ENCODE measurements at regions of chr16 and their contacts with region 1.

Region 1: GRCh38 chr16:30091474-30092372 is at the start of gene TBX6:
- DNase-seq: peak; percentile 83 to 98
- H3K4me3 ChIP-seq: peak within 1 kb of the TSS; percentile 61
- H3K27ac ChIP-seq: peak within 1 kb of the TSS; percentile 87
- H3K4me1 ChIP-seq: peaks cover 55% of the 10 kb centered on the region
- H3K27me3 ChIP-seq: no peaks in the 10 kb centered on the region
- CTCF ChIP-seq: peak; percentile 72
- total RNA-seq, gene TBX6: 8.3 and 9.6 TPM in 2 replicates

Region 2: GRCh38 chr16:30052671-30053372 is 38.9 kb before region 1 on chr16:
- CTCF ChIA-PET with region 1: no interaction called
- POLR2A ChIA-PET with region 1: interaction called, 32 read pairs
- intact Hi-C with region 1: no loop called
- DNase-seq: peak; percentile 83 to 98
- H3K4me3 ChIP-seq: peak overlapping the region; percentile 66
- H3K27ac ChIP-seq: peak overlapping the region; percentile 28
- H3K4me1 ChIP-seq: peaks cover 20% of the 10 kb centered on the region
- H3K27me3 ChIP-seq: no peaks in the 10 kb centered on the region
- CTCF ChIP-seq: no peak

Region 3: DNA sequence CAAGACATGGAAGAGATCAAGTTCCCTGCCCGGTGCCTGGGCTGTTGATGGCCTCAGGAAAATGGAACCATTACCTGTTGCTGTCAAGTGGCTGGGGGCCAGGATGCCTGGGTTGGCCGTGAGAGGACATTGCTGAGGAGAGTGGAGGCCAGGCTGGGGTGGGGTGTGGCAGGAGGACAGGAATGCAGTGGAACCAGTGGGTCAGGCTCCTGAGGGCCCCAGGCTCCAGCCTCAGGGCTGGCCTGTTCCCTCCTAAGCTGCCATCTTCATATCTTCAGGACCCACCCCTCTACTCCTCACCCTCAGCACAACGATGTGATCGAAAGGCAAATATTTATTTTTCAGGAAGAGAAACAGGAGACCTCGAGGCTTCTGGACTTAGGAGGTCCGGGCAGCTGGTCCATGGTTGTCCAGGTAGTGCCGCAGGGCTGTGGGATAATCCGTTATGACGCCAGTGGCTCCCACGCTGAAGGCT is 12.8 kb after region 1 on chr16:
- CTCF ChIA-PET with region 1: interaction called, 4 read pairs
- POLR2A ChIA-PET with region 1: no interaction called
- intact Hi-C with region 1: loop called (anchors 2 kb)
- DNase-seq: peak; percentile 89 to 97
- H3K4me3 ChIP-seq: 0 out of 2 replicates have a peak overlapping the region, but pooled peaks have one; percentile 3
- H3K27ac ChIP-seq: peak overlapping the region; percentile 73
- H3K4me1 ChIP-seq: peaks cover 23% of the 10 kb centered on the region
- H3K27me3 ChIP-seq: no peaks in the 10 kb centered on the region
- CTCF ChIP-seq: no peak

Region 4: GRCh38 chr16:30120340-30121105 is 28.8 kb after region 1 on chr16:
- CTCF ChIA-PET with region 1: interaction called, 8 read pairs
- POLR2A ChIA-PET with region 1: interaction called, 8 read pairs
- intact Hi-C with region 1: loop called (anchors 1 kb)
- DNase-seq: peak in 1 of 2 experiments; percentile 16
- H3K4me3 ChIP-seq: no peak overlapping the region
- H3K27ac ChIP-seq: no peak overlapping the region
- H3K4me1 ChIP-seq: peaks cover 37% of the 10 kb centered on the region
- H3K27me3 ChIP-seq: no peaks in the 10 kb centered on the region
- CTCF ChIP-seq: no peak

Region 5: GRCh38 chr16:30378236-30379204 is 286.8 kb after region 1 on chr16:
- CTCF ChIA-PET with region 1: no interaction called
- POLR2A ChIA-PET with region 1: interaction called, 3 read pairs
- intact Hi-C with region 1: loop called (anchors 5 kb)
- DNase-seq: peak; percentile 91 to 100
- H3K4me3 ChIP-seq: peak overlapping the region; percentile 80
- H3K27ac ChIP-seq: peak overlapping the region; percentile 92
- H3K4me1 ChIP-seq: peaks cover 19% of the 10 kb centered on the region
- H3K27me3 ChIP-seq: no peaks in the 10 kb centered on the region
- CTCF ChIP-seq: peak; percentile 18; the same call in 1 of the 2 replicates

Region 6: DNA sequence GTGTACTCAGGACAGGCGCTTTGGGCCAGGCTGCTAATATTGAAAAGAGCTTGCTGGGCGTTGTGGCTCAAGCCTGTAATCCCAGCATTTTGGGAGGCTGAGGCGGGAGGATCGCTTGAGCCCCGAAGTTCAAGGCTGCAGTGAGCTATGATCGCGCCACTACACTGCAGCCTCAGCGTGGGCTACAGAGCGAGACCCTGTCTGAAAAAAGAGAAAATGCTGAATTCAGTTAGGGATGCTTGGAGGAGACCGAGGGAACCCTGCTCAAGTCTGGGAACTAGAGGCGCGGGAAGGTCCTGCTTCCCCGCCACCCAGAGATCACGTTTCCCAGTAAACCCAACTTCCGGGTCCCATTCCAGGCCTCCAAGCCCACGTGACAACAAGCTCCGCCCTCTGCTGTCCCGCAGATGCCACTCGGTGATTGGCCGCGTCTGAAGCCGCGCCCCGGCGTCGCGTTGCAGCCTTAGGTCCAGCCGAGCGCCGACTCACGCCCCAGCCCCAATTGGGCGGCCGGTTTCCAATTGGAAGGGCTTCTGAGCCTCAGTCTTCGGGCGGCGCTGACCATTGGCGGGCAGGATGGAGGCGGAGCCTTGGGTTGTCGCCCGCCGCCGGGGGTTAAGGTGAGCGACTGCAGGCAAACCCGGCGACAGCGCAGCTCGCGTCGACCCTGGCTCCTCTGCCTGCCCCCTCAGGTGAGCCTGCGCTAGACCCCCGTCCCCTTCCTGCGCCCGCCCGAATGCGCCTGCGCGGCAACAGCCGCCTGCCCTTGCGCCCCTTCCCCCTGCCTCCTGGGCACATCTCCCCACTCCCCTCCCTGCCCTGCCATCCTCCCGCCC is 656.3 kb after region 1 on chr16 and contains the start of gene PHKG2:
- CTCF ChIA-PET with region 1: no interaction called
- POLR2A ChIA-PET with region 1: no interaction called
- intact Hi-C with region 1: no loop called
- DNase-seq: peak; percentile 98 to 100
- H3K4me3 ChIP-seq: peak within 1 kb of the TSS; percentile 75
- H3K27ac ChIP-seq: peak within 1 kb of the TSS; percentile 53
- H3K4me1 ChIP-seq: peaks cover 13% of the 10 kb centered on the region
- H3K27me3 ChIP-seq: no peaks in the 10 kb centered on the region
- CTCF ChIP-seq: no peak
- total RNA-seq, gene PHKG2: 66.1 and 67.3 TPM in 2 replicates

Measured in PC-9 (cell line).